Aorta (tissue), 5 donors: ENCODE measurements at regions of chr4 and their contacts with region 1.

Region 1: GRCh38 chr4:2418650-2419571 is at the start of gene CFAP99:
- DNase-seq: peak; percentile 99
- ATAC-seq: peak; percentile 96
- H3K4me3 ChIP-seq: peak within 1 kb of the TSS; percentile 77 to 91
- H3K27ac ChIP-seq: no peak within 1 kb of the TSS
- H3K4me1 ChIP-seq: peaks cover 0 to 3% of the 10 kb centered on the region in 2 donors
- H3K27me3 ChIP-seq: no peaks in the 10 kb centered on the region
- total RNA-seq, gene CFAP99: 0.13 TPM in 1 of 2 donors, not detected in the other

Region 2: GRCh38 chr4:2262143-2262943 is 156.6 kb before region 1 on chr4:
- intact Hi-C with region 1: loop called (anchors 5 to 10 kb)
- DNase-seq: peak; percentile 100
- ATAC-seq: peak; percentile 96
- H3K4me3 ChIP-seq: peak overlapping the region; percentile 43 to 81
- H3K27ac ChIP-seq: peak overlapping the region in 1 of 2 donors; percentile 23
- H3K4me1 ChIP-seq: no peaks in the 10 kb centered on the region
- H3K27me3 ChIP-seq: no peaks in the 10 kb centered on the region

Region 3: GRCh38 chr4:2891294-2891693 is 472.4 kb after region 1 on chr4:
- intact Hi-C with region 1: no loop called
- DNase-seq: no peak
- ATAC-seq: no peak
- H3K4me3 ChIP-seq: no peak overlapping the region
- H3K27ac ChIP-seq: no peak overlapping the region
- H3K4me1 ChIP-seq: no peaks in the 10 kb centered on the region
- H3K27me3 ChIP-seq: no peaks in the 10 kb centered on the region